ENCODE measurements at regions of chr12 and their contacts with region 1.

Region 1: GRCh38 chr12:32240831-32241230 is 134.2 kb downstream of the BICD1 start:
- DNase-seq: no peak
- H3K4me3 Mint-ChIP-seq: no peak overlapping the region
- H3K27ac Mint-ChIP-seq: no peak overlapping the region
- H3K4me1 Mint-ChIP-seq: no peaks in the 10 kb centered on the region
- H3K27me3 Mint-ChIP-seq: no peaks in the 10 kb centered on the region
- CTCF ChIP-seq: no peak

Region 2: GRCh38 chr12:32230613-32230993 is 10.2 kb before region 1 on chr12:
- CTCF ChIA-PET with region 1: interaction called, 3 read pairs
- intact Hi-C with region 1: loop called (anchors 1 kb)
- DNase-seq: no peak
- H3K4me3 Mint-ChIP-seq: no peak overlapping the region
- H3K27ac Mint-ChIP-seq: no peak overlapping the region
- H3K4me1 Mint-ChIP-seq: no peaks in the 10 kb centered on the region
- H3K27me3 Mint-ChIP-seq: no peaks in the 10 kb centered on the region
- CTCF ChIP-seq: no peak

Region 3: DNA sequence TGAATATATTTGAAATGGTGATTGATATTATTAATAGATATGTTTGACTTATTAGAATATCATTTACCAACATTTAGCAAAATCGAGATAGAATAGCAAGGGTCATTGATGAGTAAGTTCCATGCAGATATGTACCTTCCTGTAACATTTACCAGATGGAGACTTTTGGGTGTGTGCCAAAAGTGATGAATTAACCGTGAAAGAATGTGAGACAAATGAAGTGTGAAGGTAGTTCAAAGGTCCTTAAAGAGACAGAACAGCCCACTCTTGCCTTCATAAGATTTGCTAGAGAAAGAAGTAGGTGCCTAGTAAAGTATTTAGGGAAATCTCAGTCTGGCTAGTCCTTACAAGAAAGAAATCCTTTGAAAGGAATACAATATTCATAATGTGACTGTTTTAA is 204.1 kb after region 1 on chr12:
- CTCF ChIA-PET with region 1: no interaction called
- intact Hi-C with region 1: no loop called
- DNase-seq: peak; percentile 74
- H3K4me3 Mint-ChIP-seq: no peak overlapping the region
- H3K27ac Mint-ChIP-seq: peak overlapping the region; percentile 69
- H3K4me1 Mint-ChIP-seq: peaks cover 76% of the 10 kb centered on the region
- H3K27me3 Mint-ChIP-seq: no peaks in the 10 kb centered on the region
- CTCF ChIP-seq: no peak